ENCODE measurements at regions of chr10 and their contacts with region 1.

Region 1: DNA sequence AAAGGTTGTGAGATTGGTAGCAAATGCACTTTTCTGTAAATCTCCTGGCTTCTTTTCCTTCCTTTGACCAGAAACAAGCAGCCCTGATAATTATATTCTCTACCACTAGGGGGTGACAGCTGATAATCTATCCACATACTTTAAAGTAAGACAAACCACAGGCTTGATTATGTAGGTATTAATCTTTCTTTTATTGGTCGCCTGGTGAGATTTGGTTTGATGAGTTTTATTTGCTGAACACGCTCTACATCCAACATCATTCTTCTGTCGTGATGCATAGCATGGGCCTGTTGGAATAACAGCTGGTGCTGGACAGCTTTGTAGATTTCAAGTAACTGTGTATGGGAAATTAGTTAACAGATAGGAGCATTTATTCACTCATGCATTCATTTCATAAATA is 63.5 kb downstream of the ZNF365 start:
- DNase-seq: no peak
- ATAC-seq: peak; percentile 70
- H3K4me3 Mint-ChIP-seq: no peak overlapping the region
- H3K27ac Mint-ChIP-seq: no peak overlapping the region
- H3K4me1 Mint-ChIP-seq: peaks cover 2% of the 10 kb centered on the region
- H3K27me3 Mint-ChIP-seq: no peaks in the 10 kb centered on the region
- CTCF ChIP-seq: peak; percentile 90

Region 2: GRCh38 chr10:62414359-62414758 is 23.3 kb before region 1 on chr10:
- CTCF ChIA-PET with region 1: no interaction called
- POLR2A ChIA-PET with region 1: no interaction called
- intact Hi-C with region 1: no loop called
- DNase-seq: no peak
- ATAC-seq: no peak
- H3K4me3 Mint-ChIP-seq: no peak overlapping the region
- H3K27ac Mint-ChIP-seq: no peak overlapping the region
- H3K4me1 Mint-ChIP-seq: no peaks in the 10 kb centered on the region
- H3K27me3 Mint-ChIP-seq: peaks cover 30% of the 10 kb centered on the region
- CTCF ChIP-seq: no peak

Region 3: GRCh38 chr10:62451611-62451975 is 13.9 kb after region 1 on chr10:
- CTCF ChIA-PET with region 1: interaction called, 20 read pairs
- POLR2A ChIA-PET with region 1: interaction called, 3 read pairs
- intact Hi-C with region 1: loop called (anchors 1 kb)
- DNase-seq: no peak
- ATAC-seq: peak; percentile 14
- H3K4me3 Mint-ChIP-seq: peak overlapping the region; percentile 35
- H3K27ac Mint-ChIP-seq: peak overlapping the region; percentile 74
- H3K4me1 Mint-ChIP-seq: peaks cover 37% of the 10 kb centered on the region
- H3K27me3 Mint-ChIP-seq: no peaks in the 10 kb centered on the region
- CTCF ChIP-seq: no peak

Region 4: GRCh38 chr10:62462461-62462860 is 24.8 kb after region 1 on chr10:
- CTCF ChIA-PET with region 1: interaction called, 10 read pairs
- POLR2A ChIA-PET with region 1: no interaction called
- intact Hi-C with region 1: no loop called
- DNase-seq: no peak
- ATAC-seq: no peak
- H3K4me3 Mint-ChIP-seq: no peak overlapping the region
- H3K27ac Mint-ChIP-seq: no peak overlapping the region
- H3K4me1 Mint-ChIP-seq: peaks cover 10% of the 10 kb centered on the region
- H3K27me3 Mint-ChIP-seq: no peaks in the 10 kb centered on the region
- CTCF ChIP-seq: no peak

Region 5: GRCh38 chr10:62554632-62555199 is 117.0 kb after region 1 on chr10:
- CTCF ChIA-PET with region 1: interaction called, 5 read pairs
- POLR2A ChIA-PET with region 1: no interaction called
- intact Hi-C with region 1: loop called (anchors 2 kb)
- DNase-seq: no peak
- ATAC-seq: peak; percentile 60
- H3K4me3 Mint-ChIP-seq: no peak overlapping the region
- H3K27ac Mint-ChIP-seq: peak overlapping the region; percentile 22
- H3K4me1 Mint-ChIP-seq: peaks cover 7% of the 10 kb centered on the region
- H3K27me3 Mint-ChIP-seq: peaks cover 2% of the 10 kb centered on the region
- CTCF ChIP-seq: no peak

Region 6: GRCh38 chr10:63003816-63004453 is 566.2 kb after region 1 on chr10:
- CTCF ChIA-PET with region 1: no interaction called
- POLR2A ChIA-PET with region 1: no interaction called
- intact Hi-C with region 1: loop called (anchors 5 kb)
- DNase-seq: no peak
- ATAC-seq: no peak
- H3K4me3 Mint-ChIP-seq: no peak overlapping the region
- H3K27ac Mint-ChIP-seq: no peak overlapping the region
- H3K4me1 Mint-ChIP-seq: no peaks in the 10 kb centered on the region
- H3K27me3 Mint-ChIP-seq: peaks cover 12% of the 10 kb centered on the region
- CTCF ChIP-seq: no peak

Region 7: GRCh38 chr10:63157845-63158624 is 720.3 kb after region 1 on chr10:
- CTCF ChIA-PET with region 1: interaction called, 25 read pairs
- POLR2A ChIA-PET with region 1: interaction called, 3 read pairs
- intact Hi-C with region 1: loop called (anchors 1 kb)
- DNase-seq: no peak
- ATAC-seq: peak; percentile 67
- H3K4me3 Mint-ChIP-seq: no peak overlapping the region
- H3K27ac Mint-ChIP-seq: no peak overlapping the region
- H3K4me1 Mint-ChIP-seq: peaks cover 9% of the 10 kb centered on the region
- H3K27me3 Mint-ChIP-seq: no peaks in the 10 kb centered on the region
- CTCF ChIP-seq: no peak